ENCODE measurements at regions of chr6 and their contacts with region 1.

Region 1: GRCh38 chr6:41779793-41780545 is at the start of gene FRS3:
- DNase-seq: peak; percentile 97
- H3K4me3 ChIP-seq: peak within 1 kb of the TSS; percentile 83
- H3K27ac ChIP-seq: no peak within 1 kb of the TSS
- H3K4me1 ChIP-seq: peaks cover 28% of the 10 kb centered on the region
- CTCF ChIP-seq: peak; percentile 88
- total RNA-seq, gene FRS3: 5.6 and 8.2 TPM in 2 replicates

Region 2: DNA sequence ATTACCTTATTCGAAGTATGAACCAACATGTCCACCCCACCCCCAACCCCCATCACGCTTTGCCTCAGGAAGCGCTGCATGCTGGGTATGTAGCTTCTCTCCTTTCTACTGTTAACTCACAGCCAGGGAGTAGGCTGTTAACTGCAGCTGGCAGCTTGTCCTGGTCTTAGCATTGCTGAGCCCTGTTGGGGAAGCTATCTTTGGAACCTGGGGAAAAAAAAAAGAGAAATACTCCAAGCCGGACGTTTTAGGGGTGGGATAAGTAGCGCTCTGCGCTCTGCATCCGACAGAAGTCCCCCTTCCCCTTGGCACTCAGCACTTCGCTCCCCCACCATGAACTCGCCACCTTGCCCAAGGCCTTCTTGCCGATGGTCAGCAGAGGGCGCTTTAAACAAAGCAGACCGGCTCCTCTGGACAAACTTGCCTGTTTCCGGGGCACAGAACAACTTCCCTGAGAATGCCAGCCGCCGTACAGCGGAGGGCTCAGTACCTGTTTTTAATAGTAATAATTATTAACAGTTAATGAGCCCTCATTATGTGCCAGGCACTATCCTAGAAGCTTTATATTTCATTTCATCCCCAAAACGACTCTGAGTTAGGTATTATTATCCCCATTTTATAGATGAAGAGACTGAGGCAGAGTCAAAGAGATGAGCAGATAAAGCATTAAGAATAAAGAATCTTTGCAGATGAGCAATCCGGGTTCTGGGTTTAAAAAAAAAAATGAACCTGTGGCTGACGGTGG is 176.9 kb before region 1 on chr6:
- CTCF ChIA-PET with region 1: interaction called, 3 read pairs
- POLR2A ChIA-PET with region 1: no interaction called
- intact Hi-C with region 1: loop called (anchors 1 kb)
- DNase-seq: peak; percentile 89
- H3K4me3 ChIP-seq: peak overlapping the region; percentile 47
- H3K27ac ChIP-seq: no peak overlapping the region
- H3K4me1 ChIP-seq: peaks cover 9% of the 10 kb centered on the region
- CTCF ChIP-seq: peak; percentile 99

Region 3: GRCh38 chr6:41683510-41684310 is 96.3 kb before region 1 on chr6:
- CTCF ChIA-PET with region 1: no interaction called
- POLR2A ChIA-PET with region 1: no interaction called
- intact Hi-C with region 1: loop called (anchors 5 kb)
- DNase-seq: peak; percentile 81
- H3K4me3 ChIP-seq: no peak overlapping the region
- H3K27ac ChIP-seq: no peak overlapping the region
- H3K4me1 ChIP-seq: peaks cover 16% of the 10 kb centered on the region
- CTCF ChIP-seq: peak; percentile 85

Region 4: GRCh38 chr6:41705996-41706835 is 73.8 kb before region 1 on chr6:
- CTCF ChIA-PET with region 1: no interaction called
- POLR2A ChIA-PET with region 1: no interaction called
- intact Hi-C with region 1: loop called (anchors 5 kb)
- DNase-seq: peak; percentile 94
- H3K4me3 ChIP-seq: peak overlapping the region; percentile 69
- H3K27ac ChIP-seq: peak overlapping the region; percentile 90
- H3K4me1 ChIP-seq: peaks cover 74% of the 10 kb centered on the region
- CTCF ChIP-seq: peak; percentile 96

Region 5: DNA sequence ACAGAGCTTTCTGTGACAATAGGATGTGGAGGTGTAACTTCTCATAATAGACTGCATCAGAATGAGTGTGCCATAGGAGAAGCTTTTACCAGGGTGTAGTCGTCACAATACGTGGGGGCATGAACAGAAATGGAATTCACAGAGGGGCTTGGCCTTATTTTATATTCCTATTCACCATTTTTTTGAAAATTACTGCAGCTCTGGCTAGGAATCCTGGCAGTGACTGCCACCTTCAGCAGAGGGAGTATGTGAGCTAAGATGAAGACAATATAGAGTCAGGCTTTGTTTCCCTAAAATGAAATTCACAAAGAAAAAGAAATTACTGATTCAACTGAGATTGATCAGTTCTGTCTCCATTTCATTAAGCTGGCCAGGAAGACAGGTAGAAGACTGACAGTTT is 21.4 kb after region 1 on chr6:
- CTCF ChIA-PET with region 1: no interaction called
- POLR2A ChIA-PET with region 1: no interaction called
- intact Hi-C with region 1: no loop called
- DNase-seq: peak; percentile 35
- H3K4me3 ChIP-seq: no peak overlapping the region
- H3K27ac ChIP-seq: no peak overlapping the region
- H3K4me1 ChIP-seq: no peaks in the 10 kb centered on the region
- CTCF ChIP-seq: peak; percentile 80

Region 6: GRCh38 chr6:42086046-42087035 is 306.4 kb after region 1 on chr6:
- CTCF ChIA-PET with region 1: no interaction called
- POLR2A ChIA-PET with region 1: no interaction called
- intact Hi-C with region 1: no loop called
- DNase-seq: no peak
- H3K4me3 ChIP-seq: no peak overlapping the region
- H3K27ac ChIP-seq: no peak overlapping the region
- H3K4me1 ChIP-seq: no peaks in the 10 kb centered on the region
- CTCF ChIP-seq: 0 out of 2 replicates have a peak, but pooled peaks have one; percentile 12

Region 7: GRCh38 chr6:42166444-42167141 is 386.6 kb after region 1 on chr6:
- CTCF ChIA-PET with region 1: no interaction called
- POLR2A ChIA-PET with region 1: no interaction called
- intact Hi-C with region 1: loop called (anchors 2 kb)
- DNase-seq: peak; percentile 77
- H3K4me3 ChIP-seq: no peak overlapping the region
- H3K27ac ChIP-seq: no peak overlapping the region
- H3K4me1 ChIP-seq: no peaks in the 10 kb centered on the region
- CTCF ChIP-seq: peak; percentile 91

Region 8: GRCh38 chr6:42217519-42218367 is 437.8 kb after region 1 on chr6 and contains the start of gene MRPS10:
- CTCF ChIA-PET with region 1: no interaction called
- POLR2A ChIA-PET with region 1: no interaction called
- intact Hi-C with region 1: loop called (anchors 5 kb)
- DNase-seq: peak; percentile 96
- H3K4me3 ChIP-seq: peak within 1 kb of the TSS; percentile 89
- H3K27ac ChIP-seq: peak within 1 kb of the TSS; percentile 48
- H3K4me1 ChIP-seq: peaks cover 26% of the 10 kb centered on the region
- CTCF ChIP-seq: no peak; the same call in 1 of the 2 replicates
- total RNA-seq, gene MRPS10: 25.1 and 25.8 TPM in 2 replicates